ENCODE measurements at regions of chr20 and their contacts with region 1.

Region 1: GRCh38 chr20:47317127-47317895 is 39.2 kb downstream of the ZMYND8 start:
- DNase-seq: peak; percentile 87
- ATAC-seq: peak; percentile 65
- H3K4me3 ChIP-seq: peak overlapping the region; percentile 28 to 51
- H3K27ac ChIP-seq: peak overlapping the region; percentile 92
- H3K4me1 ChIP-seq: peaks cover 81 to 87% of the 10 kb centered on the region in 2 experiments
- H3K27me3 ChIP-seq: no peaks in the 10 kb centered on the region
- CTCF ChIP-seq: no peak
- POLR2A ChIP-seq: no peak
- RAD21 ChIP-seq: no peak

Region 2: GRCh38 chr20:47330933-47331864 is 13.9 kb after region 1 on chr20:
- CTCF ChIA-PET with region 1: no interaction called
- POLR2A ChIA-PET with region 1: interaction called, 17 read pairs
- RAD21 ChIA-PET with region 1: interaction called in 1 of 2 experiments, 3 read pairs
- intact Hi-C with region 1: no loop called
- DNase-seq: peak; percentile 76
- ATAC-seq: peak; percentile 86
- H3K4me3 ChIP-seq: peak overlapping the region in 1 of 2 experiments; percentile 32; a peak in 2 of 4 replicates
- H3K27ac ChIP-seq: peak overlapping the region; percentile 70
- H3K4me1 ChIP-seq: peaks cover 85 to 91% of the 10 kb centered on the region in 2 experiments
- H3K27me3 ChIP-seq: no peaks in the 10 kb centered on the region
- CTCF ChIP-seq: no peak
- POLR2A ChIP-seq: no peak
- RAD21 ChIP-seq: no peak

Region 3: GRCh38 chr20:47356526-47357295 is 39.4 kb after region 1 on chr20 and contains the start of gene ZMYND8:
- CTCF ChIA-PET with region 1: interaction called, 4 read pairs
- POLR2A ChIA-PET with region 1: interaction called, 65 read pairs
- RAD21 ChIA-PET with region 1: interaction called in 1 of 2 experiments, 3 read pairs
- intact Hi-C with region 1: loop called (anchors 2 kb)
- DNase-seq: peak; percentile 77
- ATAC-seq: peak; percentile 61
- H3K4me3 ChIP-seq: peak within 1 kb of the TSS; percentile 53 to 60
- H3K27ac ChIP-seq: peak within 1 kb of the TSS; percentile 98
- H3K4me1 ChIP-seq: peaks cover 69 to 80% of the 10 kb centered on the region in 2 experiments
- H3K27me3 ChIP-seq: no peaks in the 10 kb centered on the region
- CTCF ChIP-seq: no peak
- POLR2A ChIP-seq: peak; percentile 74
- RAD21 ChIP-seq: no peak
- total RNA-seq, gene ZMYND8: 29.0 TPM

Region 4: DNA sequence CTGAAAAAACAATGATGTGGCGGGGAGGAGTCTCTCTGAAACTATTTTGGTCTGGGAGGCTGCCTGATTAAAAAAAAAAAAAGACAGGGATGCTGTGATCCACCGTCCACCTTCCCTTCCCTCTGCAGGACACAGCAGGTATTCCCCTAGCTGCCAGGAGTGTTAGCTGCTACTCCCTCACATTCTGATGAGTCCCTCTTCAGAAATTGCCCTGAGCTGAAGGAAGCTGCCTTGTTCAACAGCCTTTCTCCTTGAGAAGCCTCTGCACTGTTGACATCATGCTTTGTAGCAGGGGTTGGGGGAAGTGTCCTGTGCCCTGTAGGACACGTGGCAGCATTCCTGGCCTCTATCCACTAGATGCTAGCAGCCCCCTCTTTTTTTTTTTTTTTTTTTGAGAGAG is 110.9 kb after region 1 on chr20:
- CTCF ChIA-PET with region 1: no interaction called
- POLR2A ChIA-PET with region 1: no interaction called
- RAD21 ChIA-PET with region 1: no interaction called
- intact Hi-C with region 1: no loop called
- DNase-seq: no peak
- ATAC-seq: no peak
- H3K4me3 ChIP-seq: no peak overlapping the region
- H3K27ac ChIP-seq: no peak overlapping the region
- H3K4me1 ChIP-seq: peaks cover 13 to 20% of the 10 kb centered on the region in 2 experiments
- H3K27me3 ChIP-seq: no peaks in the 10 kb centered on the region
- CTCF ChIP-seq: no peak
- POLR2A ChIP-seq: no peak
- RAD21 ChIP-seq: no peak